ENCODE measurements at regions of chr4 and their contacts with region 1.

Region 1: GRCh38 chr4:184450045-184450444 is 24.3 kb downstream of the IRF2 start:
- DNase-seq: no peak
- ATAC-seq: no peak
- H3K4me3 ChIP-seq: no peak overlapping the region
- H3K4me3 Mint-ChIP-seq: peak overlapping the region in 1 of 3 donors; percentile 81
- H3K27ac ChIP-seq: no peak overlapping the region
- H3K27ac Mint-ChIP-seq: peak overlapping the region in 1 of 2 donors; percentile 71
- H3K4me1 ChIP-seq: peaks cover 21 to 47% of the 10 kb centered on the region in 2 experiments
- H3K4me1 Mint-ChIP-seq: peaks cover 87 to 92% (median 88%) of the 10 kb centered on the region in 3 donors
- H3K27me3 ChIP-seq: no peaks in the 10 kb centered on the region
- H3K27me3 Mint-ChIP-seq: no peaks in the 10 kb centered on the region

Region 2: DNA sequence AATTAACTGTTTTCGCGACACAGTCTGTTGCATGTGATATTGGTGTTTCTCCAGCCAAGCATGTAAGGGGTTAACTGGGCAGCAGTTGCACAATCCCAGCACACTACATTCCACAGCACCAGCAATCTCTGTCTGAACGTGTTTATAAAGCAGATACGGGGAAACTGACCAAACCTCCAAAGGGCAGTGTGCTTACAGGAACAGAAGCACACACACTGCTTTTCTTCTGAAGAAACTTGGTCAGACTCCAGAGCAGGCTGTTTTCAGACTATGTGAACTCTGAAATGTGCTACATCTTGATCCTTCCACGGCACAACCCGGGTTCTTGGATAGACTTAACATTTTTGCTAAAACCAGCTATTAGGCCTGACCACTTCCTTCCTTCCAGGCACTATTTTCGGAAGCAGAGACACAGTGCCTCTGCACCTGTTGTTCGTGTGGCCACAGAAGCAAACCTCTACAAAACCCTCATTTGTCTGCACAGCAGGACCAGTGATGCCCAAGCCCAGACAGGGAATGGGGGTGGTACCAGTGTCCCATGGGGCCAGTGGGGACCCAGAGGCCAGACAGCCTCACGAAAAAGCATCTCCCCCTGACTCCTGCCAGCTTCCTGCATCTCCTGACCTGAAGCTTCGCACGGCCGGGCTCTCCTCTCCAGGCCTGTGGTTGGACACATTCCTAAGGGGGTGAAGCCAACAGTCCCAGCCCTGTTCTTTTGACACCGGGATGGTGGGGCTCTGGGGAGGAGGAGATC is 65.8 kb before region 1 on chr4:
- CTCF ChIA-PET with region 1: no interaction called
- POLR2A ChIA-PET with region 1: no interaction called
- DNase-seq: peak in 4 of 35 experiments; percentile 4 to 22 (median 12)
- ATAC-seq: peak; percentile 43 to 58 (median 53)
- H3K4me3 ChIP-seq: no peak overlapping the region
- H3K4me3 Mint-ChIP-seq: peak overlapping the region; percentile 4 to 37 (median 15)
- H3K27ac ChIP-seq: no peak overlapping the region
- H3K27ac Mint-ChIP-seq: peak overlapping the region; percentile 53 to 56
- H3K4me1 ChIP-seq: peaks cover 45% of the 10 kb centered on the region in 2 experiments
- H3K4me1 Mint-ChIP-seq: peaks cover 56 to 69% (median 67%) of the 10 kb centered on the region in 3 donors
- H3K27me3 ChIP-seq: no peaks in the 10 kb centered on the region
- H3K27me3 Mint-ChIP-seq: no peaks in the 10 kb centered on the region

Region 3: GRCh38 chr4:184408021-184408710 is 41.9 kb before region 1 on chr4:
- CTCF ChIA-PET with region 1: interaction called in 1 of 2 experiments, 4 read pairs
- POLR2A ChIA-PET with region 1: interaction called in 1 of 2 experiments, 14 read pairs
- DNase-seq: no peak
- ATAC-seq: no peak
- H3K4me3 ChIP-seq: no peak overlapping the region
- H3K4me3 Mint-ChIP-seq: no peak overlapping the region
- H3K27ac ChIP-seq: peak overlapping the region; percentile 12
- H3K27ac Mint-ChIP-seq: peak overlapping the region; percentile 94 to 95
- H3K4me1 ChIP-seq: peaks cover 14 to 27% of the 10 kb centered on the region in 2 experiments
- H3K4me1 Mint-ChIP-seq: peaks cover 48 to 62% (median 57%) of the 10 kb centered on the region in 3 donors
- H3K27me3 ChIP-seq: no peaks in the 10 kb centered on the region
- H3K27me3 Mint-ChIP-seq: no peaks in the 10 kb centered on the region

Region 4: GRCh38 chr4:184617561-184618196 is 167.6 kb after region 1 on chr4:
- CTCF ChIA-PET with region 1: interaction called in 1 of 2 experiments, 10 read pairs
- POLR2A ChIA-PET with region 1: no interaction called
- DNase-seq: no peak
- ATAC-seq: no peak
- H3K4me3 ChIP-seq: no peak overlapping the region
- H3K4me3 Mint-ChIP-seq: no peak overlapping the region
- H3K27ac ChIP-seq: no peak overlapping the region
- H3K27ac Mint-ChIP-seq: no peak overlapping the region
- H3K4me1 ChIP-seq: no peaks in the 10 kb centered on the region
- H3K4me1 Mint-ChIP-seq: no peaks in the 10 kb centered on the region
- H3K27me3 ChIP-seq: no peaks in the 10 kb centered on the region
- H3K27me3 Mint-ChIP-seq: no peaks in the 10 kb centered on the region